ENCODE measurements at regions of chr10 and their contacts with region 1.

Region 1: DNA sequence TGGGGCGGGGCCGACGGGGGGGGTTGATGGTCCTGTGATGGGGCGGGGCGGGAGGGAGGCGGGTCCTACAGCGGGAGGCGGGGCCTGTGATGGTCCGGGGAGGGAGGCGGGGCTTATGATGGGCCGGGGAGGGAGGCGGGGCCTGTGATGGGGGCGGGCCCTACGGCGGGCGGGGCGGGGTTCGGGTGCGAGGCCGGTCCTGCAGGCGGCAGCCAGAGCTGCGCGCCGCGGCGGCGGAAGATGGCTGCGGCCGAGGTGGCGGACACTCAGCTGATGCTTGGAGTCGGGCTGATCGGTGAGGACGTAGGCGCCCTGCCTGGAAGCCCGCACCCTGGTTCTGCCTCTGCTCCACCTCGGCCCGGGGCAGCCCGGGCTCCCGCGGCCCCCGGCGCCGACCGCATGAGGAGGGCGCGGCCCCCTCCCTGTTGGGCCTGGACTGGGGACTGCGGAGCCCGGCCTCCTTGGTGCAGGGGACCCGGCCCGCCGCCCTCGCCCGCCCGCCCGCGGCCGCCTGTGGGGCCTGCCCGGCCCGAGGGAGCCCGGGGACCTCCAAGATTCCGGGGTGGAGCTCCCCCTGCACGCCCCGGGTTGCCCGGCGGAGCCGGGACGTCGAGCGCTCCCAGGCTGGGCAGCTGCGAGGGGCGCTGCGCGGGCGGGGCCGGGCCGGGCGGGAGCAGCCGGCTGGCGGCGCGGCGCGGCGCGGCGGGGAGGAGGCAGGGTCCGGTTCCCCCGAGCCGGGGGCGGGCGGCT is at the start of gene DENND10:
- DNase-seq: peak; percentile 36 to 87 (median 58)
- ATAC-seq: peak; percentile 81 to 86 (median 83)
- H3K4me3 ChIP-seq: peak within 1 kb of the TSS; percentile 48 to 49
- H3K4me3 Mint-ChIP-seq: peak within 1 kb of the TSS; percentile 74 to 87 (median 83)
- H3K27ac ChIP-seq: peak within 1 kb of the TSS; percentile 58
- H3K27ac Mint-ChIP-seq: peak within 1 kb of the TSS; percentile 80 to 88
- H3K4me1 ChIP-seq: peaks cover 0 to 31% of the 10 kb centered on the region in 2 experiments
- H3K4me1 Mint-ChIP-seq: peaks cover 8 to 38% (median 17%) of the 10 kb centered on the region in 3 donors
- H3K27me3 ChIP-seq: no peaks in the 10 kb centered on the region
- H3K27me3 Mint-ChIP-seq: no peaks in the 10 kb centered on the region
- total RNA-seq, gene DENND10: 28.5 to 52.4 (median 41.7) TPM

Region 2: GRCh38 chr10:118986815-118987790 is 117.0 kb before region 1 on chr10:
- CTCF ChIA-PET with region 1: no interaction called
- POLR2A ChIA-PET with region 1: no interaction called
- DNase-seq: no peak
- ATAC-seq: no peak
- H3K4me3 ChIP-seq: no peak overlapping the region
- H3K4me3 Mint-ChIP-seq: no peak overlapping the region
- H3K27ac ChIP-seq: no peak overlapping the region
- H3K27ac Mint-ChIP-seq: peak overlapping the region in 1 of 2 donors; percentile 50
- H3K4me1 ChIP-seq: no peaks in the 10 kb centered on the region
- H3K4me1 Mint-ChIP-seq: peaks cover 0 to 12% (median 5%) of the 10 kb centered on the region in 3 donors
- H3K27me3 ChIP-seq: peaks cover 0 to under 1% of the 10 kb centered on the region in 2 experiments
- H3K27me3 Mint-ChIP-seq: peaks cover 3 to 7% of the 10 kb centered on the region in 2 donors

Region 3: GRCh38 chr10:119070395-119071165 is 33.5 kb before region 1 on chr10:
- CTCF ChIA-PET with region 1: interaction called in 1 of 2 experiments, 3 read pairs
- POLR2A ChIA-PET with region 1: interaction called, 4 to 10 read pairs
- DNase-seq: no peak
- ATAC-seq: no peak
- H3K4me3 ChIP-seq: no peak overlapping the region
- H3K4me3 Mint-ChIP-seq: no peak overlapping the region
- H3K27ac ChIP-seq: no peak overlapping the region
- H3K27ac Mint-ChIP-seq: no peak overlapping the region
- H3K4me1 ChIP-seq: peaks cover 0 to 15% of the 10 kb centered on the region in 2 experiments
- H3K4me1 Mint-ChIP-seq: peaks cover 28 to 45% (median 29%) of the 10 kb centered on the region in 3 donors
- H3K27me3 ChIP-seq: no peaks in the 10 kb centered on the region
- H3K27me3 Mint-ChIP-seq: no peaks in the 10 kb centered on the region

Region 4: DNA sequence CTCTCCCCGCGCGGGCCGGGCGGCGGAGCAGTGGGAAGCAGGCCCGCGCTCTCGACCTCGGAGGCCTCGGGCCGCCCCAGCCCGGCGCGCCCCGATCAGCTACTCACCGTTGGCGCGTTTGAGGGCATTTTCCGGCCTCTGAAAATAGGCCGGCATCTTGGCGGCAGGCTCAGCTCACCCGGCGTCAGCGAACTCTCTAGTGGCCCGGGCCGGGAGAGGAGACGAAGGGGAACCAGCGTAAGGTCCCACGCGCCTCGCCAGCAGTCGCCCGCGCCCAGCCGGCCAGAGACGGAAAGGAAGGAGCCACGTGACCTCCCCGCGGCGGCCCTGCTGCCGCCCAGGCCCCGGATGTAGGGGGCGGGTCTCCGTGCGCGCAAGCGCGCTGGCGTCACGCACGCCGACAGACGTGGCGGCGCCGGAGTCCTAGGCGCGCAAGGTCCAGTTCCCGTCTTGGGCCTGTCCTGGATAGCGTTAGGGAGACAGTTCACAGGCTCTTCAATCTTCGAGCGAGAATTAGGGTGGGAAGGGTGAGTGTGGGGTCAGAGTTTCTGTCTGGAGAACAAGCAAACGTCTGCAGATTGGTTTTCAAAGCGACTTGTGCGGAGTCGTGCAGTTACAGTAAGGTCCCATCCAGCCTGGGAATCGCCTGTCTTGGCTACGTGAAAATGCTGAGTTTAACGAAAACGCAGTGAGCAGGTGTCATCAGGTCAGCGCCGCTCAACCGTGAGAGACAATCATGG is 23.4 kb before region 1 on chr10 and contains the start of gene EIF3A:
- CTCF ChIA-PET with region 1: interaction called in 1 of 2 experiments, 4 read pairs
- POLR2A ChIA-PET with region 1: interaction called in 1 of 2 experiments, 10 read pairs
- DNase-seq: peak; percentile 74 to 94 (median 87)
- ATAC-seq: peak; percentile 83 to 86 (median 86)
- H3K4me3 ChIP-seq: peak within 1 kb of the TSS; percentile 81
- H3K4me3 Mint-ChIP-seq: peak within 1 kb of the TSS; percentile 95 to 97 (median 96)
- H3K27ac ChIP-seq: peak within 1 kb of the TSS; percentile 93
- H3K27ac Mint-ChIP-seq: peak within 1 kb of the TSS; percentile 91 to 96
- H3K4me1 ChIP-seq: peaks cover 16 to 27% of the 10 kb centered on the region in 2 experiments
- H3K4me1 Mint-ChIP-seq: peaks cover 47 to 49% (median 48%) of the 10 kb centered on the region in 3 donors
- H3K27me3 ChIP-seq: no peaks in the 10 kb centered on the region
- H3K27me3 Mint-ChIP-seq: no peaks in the 10 kb centered on the region
- total RNA-seq, gene EIF3A: 102 to 124 (median 111) TPM

Region 5: DNA sequence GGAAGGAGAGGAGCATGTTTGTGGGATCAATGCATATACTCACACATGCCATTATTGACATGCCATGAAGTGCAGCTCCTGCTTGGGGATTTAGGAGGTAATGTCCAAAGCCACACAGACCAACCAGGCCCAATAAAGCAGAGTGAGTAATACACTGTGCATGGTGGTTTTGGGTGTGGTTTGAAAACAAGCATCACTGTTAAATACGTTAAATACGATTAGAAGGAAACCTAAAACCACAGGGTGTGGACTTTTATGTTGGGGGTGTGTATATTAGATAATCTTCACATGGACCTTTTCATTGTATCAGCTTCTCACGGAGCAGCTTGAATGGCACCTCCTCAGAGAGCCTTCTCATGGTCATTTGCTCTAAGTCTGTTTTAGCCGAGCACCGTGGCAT is 13.1 kb before region 1 on chr10:
- CTCF ChIA-PET with region 1: interaction called in 1 of 2 experiments, 4 read pairs
- POLR2A ChIA-PET with region 1: interaction called in 1 of 2 experiments, 15 read pairs
- DNase-seq: peak in 34 of 35 experiments; percentile 7 to 82 (median 42)
- ATAC-seq: peak; percentile 87 to 93 (median 88)
- H3K4me3 ChIP-seq: no peak overlapping the region
- H3K4me3 Mint-ChIP-seq: peak overlapping the region; percentile 53 to 71 (median 57)
- H3K27ac ChIP-seq: peak overlapping the region; percentile 90
- H3K27ac Mint-ChIP-seq: peak overlapping the region; percentile 97 to 100
- H3K4me1 ChIP-seq: peaks cover 4 to 53% of the 10 kb centered on the region in 2 experiments
- H3K4me1 Mint-ChIP-seq: peaks cover 40 to 70% (median 52%) of the 10 kb centered on the region in 3 donors
- H3K27me3 ChIP-seq: no peaks in the 10 kb centered on the region
- H3K27me3 Mint-ChIP-seq: no peaks in the 10 kb centered on the region